Activated CD8-positive, alpha-beta T cell treated with anti-CD3 and anti-CD28 coated beads, Interleukin-2, amount 10 ng/mL, durations not matched to agents 7 days and 5 days (primary cell): ENCODE measurements at regions of chr7 and their contacts with region 1.

Region 1: GRCh38 chr7:44581879-44582603 is at the start of gene TMED4:
- DNase-seq: peak; percentile 100
- ATAC-seq: peak; percentile 95
- H3K4me3 Mint-ChIP-seq: peak within 1 kb of the TSS; percentile 93
- H3K27ac Mint-ChIP-seq: peak within 1 kb of the TSS; percentile 91
- H3K4me1 Mint-ChIP-seq: peaks cover 38% of the 10 kb centered on the region
- H3K27me3 Mint-ChIP-seq: peaks cover 3% of the 10 kb centered on the region
- total RNA-seq, gene TMED4: 63.8 to 65.9 TPM

Region 2: GRCh38 chr7:44797329-44798251 is 215.5 kb after region 1 on chr7:
- CTCF ChIA-PET with region 1: interaction called, 5 read pairs
- POLR2A ChIA-PET with region 1: interaction called, 18 read pairs
- DNase-seq: peak; percentile 91
- ATAC-seq: peak; percentile 54
- H3K4me3 Mint-ChIP-seq: peak overlapping the region; percentile 94
- H3K27ac Mint-ChIP-seq: peak overlapping the region; percentile 98
- H3K4me1 Mint-ChIP-seq: peaks cover 36% of the 10 kb centered on the region
- H3K27me3 Mint-ChIP-seq: no peaks in the 10 kb centered on the region